Mammary epithelial cell (primary cell): ENCODE measurements at regions of chr4 and their contacts with region 1.

Region 1: GRCh38 chr4:123102897-123103471 is 180.6 kb upstream of the NUDT6 start:
- DNase-seq: peak; percentile 40
- H3K4me3 ChIP-seq: no peak overlapping the region
- H3K27ac ChIP-seq: no peak overlapping the region
- H3K4me1 ChIP-seq: no peaks in the 10 kb centered on the region
- H3K27me3 ChIP-seq: no peaks in the 10 kb centered on the region
- CTCF ChIP-seq: peak; percentile 60 to 71

Region 2: DNA sequence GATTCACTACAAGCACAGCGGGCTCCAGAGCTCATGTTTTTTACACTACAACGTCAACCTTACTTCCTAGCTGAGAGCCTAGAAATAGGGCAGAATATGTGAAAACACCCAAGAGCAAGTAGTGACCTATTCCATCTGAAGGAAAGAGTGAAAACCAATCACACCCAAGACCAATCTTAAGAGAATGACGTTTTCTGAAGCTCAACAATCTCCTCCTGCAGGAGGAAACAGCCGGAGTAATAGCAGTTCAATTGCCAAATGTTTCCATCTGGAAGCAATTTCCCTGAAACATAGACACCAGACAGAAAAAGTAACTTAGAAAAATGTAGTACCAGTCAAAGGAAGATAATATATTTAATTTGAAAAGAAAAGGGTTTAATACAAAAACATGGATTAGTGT is 1548.6 kb before region 1 on chr4:
- CTCF ChIA-PET with region 1: no interaction called
- dilution Hi-C with region 1: no loop called
- in situ Hi-C with region 1: no loop called
- intact Hi-C with region 1: no loop called
- DNase-seq: no peak
- H3K4me3 ChIP-seq: no peak overlapping the region
- H3K27ac ChIP-seq: no peak overlapping the region
- H3K4me1 ChIP-seq: peaks cover 13% of the 10 kb centered on the region
- H3K27me3 ChIP-seq: no peaks in the 10 kb centered on the region
- CTCF ChIP-seq: no peak

Region 3: DNA sequence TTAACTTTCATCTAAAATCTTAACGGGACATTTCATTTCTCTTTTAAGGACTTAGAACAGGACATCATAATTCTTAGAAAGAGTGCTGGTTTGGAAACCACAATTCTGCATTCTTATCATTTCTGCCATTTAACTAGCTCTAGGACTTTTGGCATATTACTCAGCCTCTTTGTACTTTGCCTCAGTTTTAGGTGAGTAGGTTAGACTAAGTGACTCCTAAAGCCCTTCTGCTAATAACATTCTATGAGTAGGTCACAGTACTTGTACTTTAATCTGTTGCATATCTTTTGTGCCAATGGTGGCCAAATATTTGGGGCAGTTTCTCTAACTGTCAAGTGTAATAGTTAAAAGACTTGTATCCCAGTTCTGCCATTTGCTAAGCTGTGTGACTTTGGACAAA is 65.2 kb before region 1 on chr4:
- CTCF ChIA-PET with region 1: no interaction called
- dilution Hi-C with region 1: no loop called
- in situ Hi-C with region 1: no loop called
- intact Hi-C with region 1: no loop called
- DNase-seq: no peak
- H3K4me3 ChIP-seq: no peak overlapping the region
- H3K27ac ChIP-seq: no peak overlapping the region
- H3K4me1 ChIP-seq: no peaks in the 10 kb centered on the region
- H3K27me3 ChIP-seq: no peaks in the 10 kb centered on the region
- CTCF ChIP-seq: no peak

Region 4: GRCh38 chr4:123200051-123200940 is 97.3 kb after region 1 on chr4:
- CTCF ChIA-PET with region 1: no interaction called
- dilution Hi-C with region 1: no loop called
- in situ Hi-C with region 1: no loop called
- intact Hi-C with region 1: no loop called
- DNase-seq: peak; percentile 50
- H3K4me3 ChIP-seq: no peak overlapping the region
- H3K27ac ChIP-seq: no peak overlapping the region
- H3K4me1 ChIP-seq: peaks cover 6% of the 10 kb centered on the region
- H3K27me3 ChIP-seq: no peaks in the 10 kb centered on the region
- CTCF ChIP-seq: no peak

Region 5: GRCh38 chr4:123250843-123251242 is 147.9 kb after region 1 on chr4:
- CTCF ChIA-PET with region 1: no interaction called
- dilution Hi-C with region 1: no loop called
- in situ Hi-C with region 1: no loop called
- intact Hi-C with region 1: no loop called
- DNase-seq: peak; percentile 52
- H3K4me3 ChIP-seq: no peak overlapping the region
- H3K27ac ChIP-seq: no peak overlapping the region
- H3K4me1 ChIP-seq: no peaks in the 10 kb centered on the region
- H3K27me3 ChIP-seq: no peaks in the 10 kb centered on the region
- CTCF ChIP-seq: no peak

Region 6: GRCh38 chr4:124322234-124323065 is 1219.5 kb after region 1 on chr4:
- CTCF ChIA-PET with region 1: no interaction called
- dilution Hi-C with region 1: no loop called
- in situ Hi-C with region 1: no loop called
- intact Hi-C with region 1: loop called (anchors 2 kb)
- DNase-seq: peak; percentile 24
- H3K4me3 ChIP-seq: no peak overlapping the region
- H3K27ac ChIP-seq: no peak overlapping the region
- H3K4me1 ChIP-seq: no peaks in the 10 kb centered on the region
- H3K27me3 ChIP-seq: no peaks in the 10 kb centered on the region
- CTCF ChIP-seq: peak; percentile 42 to 48